Activated naive CD4-positive, alpha-beta T cell treated with anti-CD3 and anti-CD28 coated beads for 36 hours (primary cell): ENCODE measurements at regions of chr19 and their contacts with region 1.

Region 1: DNA sequence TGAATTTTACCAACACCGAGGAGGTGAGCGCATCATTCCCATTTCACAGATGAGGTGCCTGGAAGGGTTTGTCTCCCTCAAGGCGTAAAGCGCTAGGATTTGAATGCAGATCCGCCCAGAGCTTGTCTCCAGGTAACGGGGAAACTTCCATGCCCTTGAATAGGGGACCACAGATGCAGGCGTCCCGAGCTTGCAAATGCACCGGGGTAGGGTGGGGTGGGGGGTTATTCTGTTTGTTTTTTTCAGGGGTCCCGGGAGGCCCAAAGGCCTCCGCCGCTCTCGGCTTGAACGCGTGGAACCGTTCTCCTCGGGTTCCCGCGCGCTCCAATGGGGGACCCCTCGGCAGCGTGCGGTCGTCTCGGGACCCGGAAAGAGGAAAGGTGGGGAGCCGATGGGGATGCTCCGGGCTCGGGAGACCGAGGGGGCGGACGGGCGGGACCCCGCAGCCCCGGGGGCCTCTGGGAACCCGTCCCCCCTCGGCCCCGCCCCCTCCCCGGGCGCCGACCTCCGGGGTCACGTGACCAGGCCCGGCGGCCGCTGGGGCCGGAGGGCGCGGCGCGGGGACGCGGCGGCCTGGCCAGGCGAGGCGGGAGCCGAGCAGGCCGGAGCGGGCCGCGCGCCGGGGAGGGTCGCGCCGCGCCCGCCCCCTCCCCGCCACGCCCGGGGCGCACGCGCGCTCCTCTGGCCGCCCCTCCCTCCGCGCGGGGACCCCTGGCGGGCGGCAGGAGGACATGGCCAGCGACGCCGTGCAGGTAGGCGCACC is at the start of gene PKN1:
- DNase-seq: peak; percentile 33
- H3K4me3 Mint-ChIP-seq: peak within 1 kb of the TSS; percentile 78
- H3K27ac Mint-ChIP-seq: peak within 1 kb of the TSS; percentile 79
- H3K4me1 Mint-ChIP-seq: peaks cover 37% of the 10 kb centered on the region
- H3K27me3 Mint-ChIP-seq: no peaks in the 10 kb centered on the region
- total RNA-seq, gene PKN1: 159 to 164 TPM

Region 2: DNA sequence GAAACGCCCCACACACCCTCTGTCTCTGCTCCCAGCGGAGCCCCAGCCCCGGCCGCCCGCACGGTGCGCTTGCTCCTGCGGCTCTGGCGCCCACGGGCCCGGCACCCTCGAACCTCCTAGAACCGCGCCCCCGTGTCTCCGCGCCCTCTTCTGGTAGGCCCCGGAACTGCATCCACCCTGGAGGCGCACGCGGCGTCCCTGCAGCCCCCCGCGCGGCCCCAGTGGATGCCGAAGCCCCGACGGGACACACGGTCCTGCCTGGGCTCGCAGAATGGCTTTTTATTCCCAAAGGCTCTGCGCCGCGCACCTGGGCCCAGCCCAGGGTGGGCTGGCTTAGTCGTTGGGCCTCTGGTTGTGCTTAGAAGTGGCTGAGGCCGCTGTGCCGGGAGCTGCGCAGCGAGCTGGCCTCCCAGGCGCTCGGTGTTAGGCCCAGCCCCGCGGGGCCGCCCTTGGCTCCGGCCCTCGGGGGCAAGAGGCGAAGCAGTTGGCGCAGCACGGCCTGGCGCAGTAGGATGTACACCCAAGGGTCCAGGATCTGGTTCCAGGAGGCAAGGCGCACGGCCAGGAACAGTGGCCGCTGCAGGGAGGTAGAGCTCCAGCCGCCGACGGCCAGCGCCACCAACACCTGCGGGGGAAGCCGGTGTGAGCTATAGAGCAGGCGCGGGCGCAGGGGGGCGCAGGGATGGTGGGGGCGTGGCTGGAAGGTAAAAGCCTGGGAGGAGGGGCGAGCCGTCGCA is 39.4 kb after region 1 on chr19:
- CTCF ChIA-PET with region 1: interaction called, 55 read pairs
- intact Hi-C with region 1: loop called (anchors 1 kb)
- DNase-seq: peak; percentile 83
- H3K4me3 Mint-ChIP-seq: no peak overlapping the region
- H3K27ac Mint-ChIP-seq: no peak overlapping the region
- H3K4me1 Mint-ChIP-seq: peaks cover 31% of the 10 kb centered on the region
- H3K27me3 Mint-ChIP-seq: peaks cover 19% of the 10 kb centered on the region

Region 3: DNA sequence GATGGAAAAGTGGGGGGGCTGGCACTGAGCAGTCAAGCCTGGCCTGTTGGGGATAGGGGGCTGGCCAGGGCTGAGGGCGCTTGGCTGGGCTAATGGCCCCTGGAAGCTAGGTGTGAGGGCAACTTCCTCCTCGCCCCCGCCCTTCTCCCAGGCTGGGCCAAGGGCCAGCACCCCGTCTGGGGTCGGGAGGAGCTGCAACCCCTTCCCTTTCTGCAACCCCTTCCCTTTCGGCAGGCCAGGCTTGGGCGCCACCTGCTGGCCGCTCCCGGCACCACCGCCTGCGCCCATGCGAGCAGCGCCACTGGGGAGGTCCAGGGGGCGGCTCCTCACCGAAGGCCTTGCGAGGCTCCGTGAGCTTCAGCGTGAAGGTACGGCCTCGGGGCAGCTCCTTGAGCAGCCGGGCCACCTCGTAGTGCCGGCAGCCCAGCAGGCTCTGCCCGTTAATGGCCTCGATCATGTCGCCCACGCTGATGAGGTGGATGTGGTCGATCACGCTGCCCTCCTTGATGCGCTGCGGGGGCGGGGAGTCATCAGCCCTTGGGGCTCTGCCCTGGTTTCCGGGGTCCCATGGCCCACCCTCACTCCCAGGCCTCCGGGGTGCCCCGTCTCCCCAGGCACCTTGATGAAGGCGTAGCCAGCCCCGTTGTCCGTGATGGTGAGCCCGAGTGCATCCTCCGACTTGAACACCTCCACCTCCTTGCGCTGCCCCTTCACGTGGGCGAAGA is 47.2 kb after region 1 on chr19:
- CTCF ChIA-PET with region 1: interaction called, 55 read pairs
- intact Hi-C with region 1: no loop called
- DNase-seq: peak; percentile 74
- H3K4me3 Mint-ChIP-seq: no peak overlapping the region
- H3K27ac Mint-ChIP-seq: no peak overlapping the region
- H3K4me1 Mint-ChIP-seq: peaks cover 12% of the 10 kb centered on the region
- H3K27me3 Mint-ChIP-seq: peaks cover 3% of the 10 kb centered on the region